Activated naive CD4-positive, alpha-beta T cell treated with anti-CD3 and anti-CD28 coated beads for 36 hours (primary cell): ENCODE measurements at regions of chr19 and their contacts with region 1.

Region 1: GRCh38 chr19:55632463-55632834 is 8.1 kb upstream of the ZNF784 start:
- DNase-seq: peak; percentile 98
- H3K4me3 Mint-ChIP-seq: no peak overlapping the region
- H3K27ac Mint-ChIP-seq: peak overlapping the region; percentile 60
- H3K4me1 Mint-ChIP-seq: peaks cover 36% of the 10 kb centered on the region
- H3K27me3 Mint-ChIP-seq: no peaks in the 10 kb centered on the region

Region 2: DNA sequence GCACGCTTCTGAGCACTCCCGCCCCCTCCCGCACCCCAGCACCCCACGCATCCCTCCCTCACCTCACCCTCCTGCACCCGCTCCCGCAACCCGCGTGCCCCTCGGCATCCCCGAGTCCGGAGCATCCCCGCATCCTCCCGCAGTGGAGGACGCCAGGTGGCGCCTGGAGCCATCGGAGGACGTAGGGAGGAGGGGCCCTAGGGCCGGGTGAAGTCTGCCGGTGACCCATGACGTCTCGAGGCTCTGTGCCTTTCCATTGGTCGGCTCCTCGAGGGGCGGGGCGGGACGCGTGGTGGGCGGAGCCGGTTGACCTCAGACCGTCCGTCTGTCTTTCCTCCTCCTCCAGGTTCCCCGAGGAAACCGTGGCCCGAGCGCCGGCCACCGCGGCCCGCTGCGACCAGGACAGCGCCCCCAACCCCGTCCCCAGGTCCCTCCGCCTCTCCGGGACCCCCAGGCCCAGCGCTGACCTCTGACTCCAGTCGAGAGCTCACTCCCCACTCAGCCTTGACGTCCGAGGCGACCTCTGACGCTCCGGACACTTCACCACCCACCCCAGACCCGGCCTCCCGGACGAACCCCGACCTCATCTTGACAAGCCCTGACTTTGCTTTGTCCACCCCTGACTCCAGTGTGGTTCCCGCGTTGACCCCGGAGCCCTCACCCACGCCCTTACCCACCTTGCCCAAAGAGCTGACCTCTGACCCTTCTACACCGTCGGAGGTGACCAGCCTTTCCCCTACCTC is 115.4 kb before region 1 on chr19:
- CTCF ChIA-PET with region 1: interaction called, 26 read pairs
- intact Hi-C with region 1: loop called (anchors 1 kb)
- DNase-seq: peak; percentile 93
- H3K4me3 Mint-ChIP-seq: peak overlapping the region; percentile 59
- H3K27ac Mint-ChIP-seq: no peak overlapping the region
- H3K4me1 Mint-ChIP-seq: peaks cover 3% of the 10 kb centered on the region
- H3K27me3 Mint-ChIP-seq: peaks cover 1% of the 10 kb centered on the region

Region 3: GRCh38 chr19:55592391-55593090 is 39.9 kb before region 1 on chr19:
- CTCF ChIA-PET with region 1: no interaction called
- intact Hi-C with region 1: no loop called
- DNase-seq: no peak
- H3K4me3 Mint-ChIP-seq: no peak overlapping the region
- H3K27ac Mint-ChIP-seq: no peak overlapping the region
- H3K4me1 Mint-ChIP-seq: peaks cover 6% of the 10 kb centered on the region
- H3K27me3 Mint-ChIP-seq: no peaks in the 10 kb centered on the region

Region 4: GRCh38 chr19:55643348-55644176 is 11.1 kb after region 1 on chr19 and contains the start of gene ZNF581:
- CTCF ChIA-PET with region 1: interaction called, 20 read pairs
- intact Hi-C with region 1: loop called (anchors 1 kb)
- DNase-seq: peak; percentile 82
- H3K4me3 Mint-ChIP-seq: peak within 1 kb of the TSS; percentile 93
- H3K27ac Mint-ChIP-seq: peak within 1 kb of the TSS; percentile 96
- H3K4me1 Mint-ChIP-seq: peaks cover 44% of the 10 kb centered on the region
- H3K27me3 Mint-ChIP-seq: no peaks in the 10 kb centered on the region
- total RNA-seq, gene ZNF581: 18.0 to 20.7 TPM

Region 5: GRCh38 chr19:55674841-55675660 is 42.6 kb after region 1 on chr19 and contains the start of gene EPN1:
- CTCF ChIA-PET with region 1: interaction called, 9 read pairs
- intact Hi-C with region 1: loop called (anchors 2 kb)
- DNase-seq: peak; percentile 98
- H3K4me3 Mint-ChIP-seq: peak within 1 kb of the TSS; percentile 99
- H3K27ac Mint-ChIP-seq: peak within 1 kb of the TSS; percentile 91
- H3K4me1 Mint-ChIP-seq: peaks cover 68% of the 10 kb centered on the region
- H3K27me3 Mint-ChIP-seq: no peaks in the 10 kb centered on the region
- total RNA-seq, gene EPN1: 23.4 TPM

Region 6: DNA sequence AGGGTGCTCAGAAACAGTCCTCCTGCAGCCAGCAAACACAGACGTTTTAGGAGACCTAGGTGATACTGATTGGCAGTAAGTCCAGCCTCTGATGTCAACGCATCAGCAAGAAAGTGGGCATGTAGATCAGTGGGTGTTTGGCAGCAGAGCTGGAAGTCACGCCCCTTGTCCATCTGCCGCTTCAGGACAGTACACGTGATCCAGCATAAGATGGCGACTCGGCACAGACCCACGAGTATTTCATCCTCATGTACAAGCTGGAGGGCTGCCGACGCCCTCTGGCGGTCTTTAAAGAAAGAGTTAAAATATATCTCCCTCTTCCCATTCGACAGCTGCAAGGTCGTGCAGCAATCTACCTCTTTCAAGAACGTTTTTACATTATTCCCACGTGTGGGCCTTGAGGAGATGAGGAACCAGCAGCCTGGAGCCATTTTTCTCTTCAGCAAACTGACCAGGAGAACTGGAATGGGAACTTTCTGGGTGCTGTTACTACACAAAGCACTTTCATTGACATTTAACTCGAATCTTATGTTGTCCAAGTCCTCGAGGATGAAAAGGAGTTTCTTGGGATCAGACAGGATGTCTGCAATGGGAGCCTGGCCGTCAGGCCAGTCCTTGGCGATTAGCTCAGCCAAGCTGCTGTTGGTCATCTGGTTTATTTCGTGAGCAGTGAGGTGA is 177.1 kb after region 1 on chr19:
- CTCF ChIA-PET with region 1: interaction called, 32 read pairs
- intact Hi-C with region 1: no loop called
- DNase-seq: peak; percentile 56
- H3K4me3 Mint-ChIP-seq: no peak overlapping the region
- H3K27ac Mint-ChIP-seq: no peak overlapping the region
- H3K4me1 Mint-ChIP-seq: peaks cover 6% of the 10 kb centered on the region
- H3K27me3 Mint-ChIP-seq: peaks cover 18% of the 10 kb centered on the region